Aorta (tissue), 5 donors: ENCODE measurements at regions of chr16 and their contacts with region 1.

Region 1: DNA sequence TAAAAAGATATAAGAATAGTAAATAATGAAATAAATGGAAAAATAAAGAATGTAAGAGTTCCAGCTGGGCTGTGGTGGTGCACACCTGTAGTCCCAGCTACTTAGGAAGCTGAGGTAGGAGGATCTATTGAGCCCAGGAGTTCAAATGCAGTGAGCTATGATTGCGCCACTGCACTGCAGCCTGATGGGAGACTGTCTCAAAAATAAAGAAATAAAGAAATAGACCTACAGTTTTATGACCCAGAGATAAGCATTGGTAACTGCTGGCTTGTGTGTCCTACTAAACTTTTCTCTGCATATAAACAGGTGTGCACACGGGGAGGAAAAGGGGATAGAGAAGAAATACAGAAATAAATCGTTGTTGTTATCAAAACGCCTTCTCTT is 7.8 kb upstream of the PDP2 start:
- DNase-seq: no peak
- ATAC-seq: no peak
- H3K4me3 ChIP-seq: no peak overlapping the region
- H3K27ac ChIP-seq: no peak overlapping the region
- H3K4me1 ChIP-seq: no peaks in the 10 kb centered on the region
- H3K27me3 ChIP-seq: no peaks in the 10 kb centered on the region

Region 2: DNA sequence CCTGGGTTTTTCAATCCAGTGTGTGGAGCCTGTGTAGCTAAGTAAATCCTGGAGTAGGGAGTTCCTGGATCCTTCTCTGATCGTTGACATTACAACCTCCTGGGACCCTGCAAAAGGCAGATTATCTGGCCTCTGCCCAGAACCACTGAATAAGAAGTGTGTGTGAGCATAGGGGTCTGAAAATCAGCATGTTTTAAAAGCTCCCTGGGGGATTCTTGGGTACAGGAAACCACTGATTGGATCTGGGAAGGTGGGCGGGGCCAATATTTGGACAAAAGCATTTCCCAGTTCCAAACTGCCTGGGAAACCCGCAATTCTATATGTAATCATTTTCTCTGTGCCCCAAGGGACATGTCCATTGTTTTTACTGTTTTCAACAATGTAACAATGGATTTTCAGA is 472.6 kb before region 1 on chr16:
- intact Hi-C with region 1: loop called (anchors 5 to 10 kb)
- DNase-seq: no peak
- ATAC-seq: no peak
- H3K4me3 ChIP-seq: no peak overlapping the region
- H3K27ac ChIP-seq: no peak overlapping the region
- H3K4me1 ChIP-seq: no peaks in the 10 kb centered on the region
- H3K27me3 ChIP-seq: no peaks in the 10 kb centered on the region

Region 3: DNA sequence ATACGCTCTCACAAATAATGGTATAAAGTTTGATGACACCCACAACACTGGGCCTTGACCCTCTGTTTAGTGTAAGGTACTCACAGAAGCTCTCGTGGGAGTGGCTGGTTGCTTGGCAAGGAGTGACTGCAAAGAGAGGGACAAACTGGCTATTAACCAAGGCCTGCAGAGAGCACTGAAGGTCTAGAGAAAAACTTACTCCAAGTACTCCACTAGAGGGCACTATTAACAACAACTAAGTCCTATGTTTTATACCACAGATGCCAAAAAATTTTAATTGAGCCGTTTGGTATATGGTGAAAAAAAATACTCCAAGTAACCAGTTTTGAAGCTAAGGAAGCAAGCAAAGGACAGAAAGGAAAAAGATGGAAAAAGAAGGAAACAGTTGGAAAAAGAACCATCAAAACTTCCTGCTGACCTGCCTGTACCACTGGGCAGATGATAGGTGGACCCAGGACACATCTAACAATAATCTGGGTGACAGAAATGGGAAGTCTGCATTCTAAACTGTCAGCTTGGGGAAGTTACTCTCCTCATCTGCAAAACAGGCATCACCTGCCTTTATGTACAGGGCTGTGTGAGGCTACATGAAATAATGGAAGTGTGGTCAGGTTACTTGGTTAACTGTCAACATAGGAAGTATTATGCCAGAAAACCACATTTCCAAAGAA is 144.3 kb before region 1 on chr16:
- intact Hi-C with region 1: loop called (anchors 5 to 10 kb)
- DNase-seq: peak in 1 of 2 donors; percentile 8
- ATAC-seq: peak; percentile 86
- H3K4me3 ChIP-seq: no peak overlapping the region
- H3K27ac ChIP-seq: no peak overlapping the region
- H3K4me1 ChIP-seq: no peaks in the 10 kb centered on the region
- H3K27me3 ChIP-seq: no peaks in the 10 kb centered on the region

Region 4: DNA sequence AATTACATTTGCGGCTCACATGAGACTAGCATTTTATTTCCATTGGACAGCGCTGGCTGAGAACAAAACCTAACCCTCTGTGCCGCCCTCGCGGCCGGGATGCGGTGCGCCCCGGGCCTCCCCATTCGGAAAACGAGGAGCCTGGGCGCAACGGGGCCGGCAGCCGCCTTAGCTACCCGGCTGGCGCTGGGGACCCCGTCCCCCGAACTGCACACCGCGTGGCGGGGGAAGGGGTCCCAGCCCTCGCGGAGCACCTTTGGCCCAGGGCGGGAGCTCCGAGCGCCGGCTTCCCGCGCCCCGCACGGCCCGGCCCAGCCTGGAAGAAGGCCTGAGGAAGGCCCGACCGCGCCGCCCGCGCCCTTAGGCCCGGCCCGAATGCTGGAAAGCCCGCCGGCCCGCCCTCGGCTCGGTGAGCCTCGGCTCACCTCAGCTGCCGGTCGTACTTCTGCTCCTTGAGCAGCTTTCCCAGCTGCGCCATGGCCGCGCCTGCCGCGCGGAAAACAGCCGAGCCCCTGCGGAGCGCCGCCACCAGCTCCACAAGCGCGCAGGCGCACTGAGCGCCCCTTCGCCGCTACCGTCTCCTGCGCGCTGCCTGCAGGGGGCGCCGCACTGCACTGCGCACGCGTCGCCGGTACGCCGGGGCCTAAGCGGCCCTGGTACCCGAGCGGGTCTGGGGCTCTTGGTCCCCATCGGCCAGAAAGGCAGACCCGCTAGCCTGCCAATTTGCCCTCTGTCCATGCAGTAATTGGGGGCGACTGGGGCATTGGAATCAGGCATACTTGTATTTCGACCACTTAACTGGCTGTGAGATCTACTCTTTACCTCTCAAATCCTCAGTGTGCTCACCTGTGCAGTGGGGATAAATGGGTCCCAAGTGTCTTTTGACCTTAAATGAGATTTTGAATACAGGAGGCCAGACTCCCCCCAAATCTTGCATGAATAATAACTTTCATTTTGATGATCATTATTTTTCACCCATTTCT is 41.8 kb before region 1 on chr16 and contains the start of gene NAE1:
- intact Hi-C with region 1: loop called (anchors 2 kb)
- DNase-seq: peak; percentile 92 to 96
- ATAC-seq: peak; percentile 99
- H3K4me3 ChIP-seq: peak within 1 kb of the TSS; percentile 43 to 89
- H3K27ac ChIP-seq: peak within 1 kb of the TSS; percentile 69 to 88
- H3K4me1 ChIP-seq: peaks cover 0 to 4% of the 10 kb centered on the region in 2 donors
- H3K27me3 ChIP-seq: no peaks in the 10 kb centered on the region
- total RNA-seq, gene NAE1: 40.8 to 46.2 TPM

Region 5: GRCh38 chr16:66899945-66900710 is 27.6 kb after region 1 on chr16:
- intact Hi-C with region 1: no loop called
- DNase-seq: peak; percentile 86 to 95
- ATAC-seq: peak; percentile 53
- H3K4me3 ChIP-seq: no peak overlapping the region
- H3K27ac ChIP-seq: peak overlapping the region; percentile 73 to 81
- H3K4me1 ChIP-seq: peaks cover 4% of the 10 kb centered on the region in 2 donors
- H3K27me3 ChIP-seq: no peaks in the 10 kb centered on the region